CD8-positive, alpha-beta T cell (primary cell): ENCODE measurements at regions of chr19 and their contacts with region 1.

Region 1: GRCh38 chr19:58519355-58520256 is at the start of gene ZBTB45:
- DNase-seq: peak; percentile 73 to 96 (median 87)
- ATAC-seq: peak; percentile 80
- H3K4me3 ChIP-seq: peak within 1 kb of the TSS; percentile 63 to 91
- H3K4me3 Mint-ChIP-seq: peak within 1 kb of the TSS; percentile 95
- H3K27ac ChIP-seq: peak within 1 kb of the TSS; percentile 74 to 90
- H3K27ac Mint-ChIP-seq: peak within 1 kb of the TSS; percentile 97
- H3K4me1 ChIP-seq: peaks cover 23% of the 10 kb centered on the region
- H3K4me1 Mint-ChIP-seq: peaks cover 43% of the 10 kb centered on the region
- H3K27me3 ChIP-seq: no peaks in the 10 kb centered on the region
- H3K27me3 Mint-ChIP-seq: no peaks in the 10 kb centered on the region
- CTCF ChIP-seq: peak; percentile 57
- total RNA-seq, gene ZBTB45: 4.8 to 5.6 TPM

Region 2: GRCh38 chr19:57410877-57411671 is 1108.5 kb before region 1 on chr19 and contains the start of gene ZNF17:
- CTCF ChIA-PET with region 1: no interaction called
- POLR2A ChIA-PET with region 1: no interaction called
- intact Hi-C with region 1: loop called in 1 of 2 experiments (anchors 5 kb)
- DNase-seq: peak; percentile 83 to 96 (median 91)
- ATAC-seq: peak; percentile 100
- H3K4me3 ChIP-seq: peak within 1 kb of the TSS; percentile 82 to 99
- H3K4me3 Mint-ChIP-seq: peak within 1 kb of the TSS; percentile 96
- H3K27ac ChIP-seq: peak within 1 kb of the TSS; percentile 67 to 83
- H3K27ac Mint-ChIP-seq: peak within 1 kb of the TSS; percentile 94
- H3K4me1 ChIP-seq: peaks cover 13% of the 10 kb centered on the region
- H3K4me1 Mint-ChIP-seq: peaks cover 35% of the 10 kb centered on the region
- H3K27me3 ChIP-seq: no peaks in the 10 kb centered on the region
- H3K27me3 Mint-ChIP-seq: no peaks in the 10 kb centered on the region
- CTCF ChIP-seq: no peak
- total RNA-seq, gene ZNF17: 15.5 to 18.3 TPM

Region 3: GRCh38 chr19:58305065-58305931 is 214.3 kb before region 1 on chr19 and contains the start of gene ERVK3-1:
- CTCF ChIA-PET with region 1: no interaction called
- POLR2A ChIA-PET with region 1: no interaction called
- intact Hi-C with region 1: loop called (anchors 1 to 2 kb)
- DNase-seq: peak; percentile 89 to 99 (median 93)
- ATAC-seq: peak; percentile 96
- H3K4me3 ChIP-seq: peak within 1 kb of the TSS; percentile 82 to 89
- H3K4me3 Mint-ChIP-seq: peak within 1 kb of the TSS; percentile 98
- H3K27ac ChIP-seq: peak within 1 kb of the TSS; percentile 93 to 95
- H3K27ac Mint-ChIP-seq: peak within 1 kb of the TSS; percentile 99
- H3K4me1 ChIP-seq: peaks cover 27% of the 10 kb centered on the region
- H3K4me1 Mint-ChIP-seq: peaks cover 53% of the 10 kb centered on the region
- H3K27me3 ChIP-seq: no peaks in the 10 kb centered on the region
- H3K27me3 Mint-ChIP-seq: no peaks in the 10 kb centered on the region
- CTCF ChIP-seq: no peak
- total RNA-seq, gene ERVK3-1: 174 to 182 TPM

Region 4: GRCh38 chr19:58400916-58401839 is 118.4 kb before region 1 on chr19:
- CTCF ChIA-PET with region 1: no interaction called
- POLR2A ChIA-PET with region 1: no interaction called
- intact Hi-C with region 1: loop called in 1 of 2 experiments (anchors 1 kb)
- DNase-seq: peak; percentile 97 to 100 (median 99)
- ATAC-seq: peak; percentile 97
- H3K4me3 ChIP-seq: peak overlapping the region; percentile 72 to 77
- H3K4me3 Mint-ChIP-seq: peak overlapping the region; percentile 93
- H3K27ac ChIP-seq: peak overlapping the region; percentile 93 to 94
- H3K27ac Mint-ChIP-seq: peak overlapping the region; percentile 96
- H3K4me1 ChIP-seq: peaks cover 12% of the 10 kb centered on the region
- H3K4me1 Mint-ChIP-seq: peaks cover 15% of the 10 kb centered on the region
- H3K27me3 ChIP-seq: peaks cover 0 to 4% of the 10 kb centered on the region in 2 experiments
- H3K27me3 Mint-ChIP-seq: peaks cover 10% of the 10 kb centered on the region
- CTCF ChIP-seq: no peak

Region 5: DNA sequence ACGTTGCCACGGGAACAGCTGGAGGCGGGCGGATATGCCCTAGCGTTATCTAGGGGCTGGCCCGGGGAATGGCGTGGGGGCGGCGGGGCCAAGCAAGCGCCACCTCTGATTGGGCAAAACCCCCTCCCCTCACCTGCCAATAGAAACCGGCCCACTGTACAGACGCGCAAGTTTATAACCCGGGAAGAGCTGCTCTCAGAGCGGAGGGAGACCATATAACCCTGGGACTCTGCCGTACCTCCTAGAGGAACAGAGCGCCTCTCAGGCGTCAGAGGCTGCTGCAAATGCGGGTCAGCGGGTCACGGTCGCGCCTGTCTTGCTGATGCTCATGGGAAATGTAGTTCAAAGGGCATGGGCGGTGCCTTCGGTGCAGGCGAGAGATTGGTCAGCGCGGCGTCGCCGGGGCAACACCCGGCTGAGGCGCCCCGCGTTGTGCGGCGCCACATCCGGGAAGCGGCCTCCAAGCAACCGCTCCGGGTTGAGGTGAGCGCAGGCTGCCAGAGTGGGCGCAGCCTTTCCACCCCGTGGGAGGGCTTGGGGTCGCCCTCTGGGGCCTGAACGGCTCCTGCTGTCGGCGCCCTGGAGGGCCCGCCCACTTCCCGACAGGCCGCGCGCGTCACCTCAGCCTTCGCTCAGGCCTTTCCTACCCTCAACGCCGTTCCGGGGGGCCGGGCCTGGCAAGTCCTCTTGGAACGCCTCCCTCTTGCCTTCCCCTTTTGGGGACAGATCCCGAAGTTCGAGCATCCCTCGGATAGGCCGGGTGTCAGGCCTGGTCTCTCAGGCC is 43.7 kb before region 1 on chr19 and contains the start of gene ZNF446:
- CTCF ChIA-PET with region 1: no interaction called
- POLR2A ChIA-PET with region 1: interaction called, 5 read pairs
- intact Hi-C with region 1: loop called (anchors 1 kb)
- DNase-seq: peak; percentile 92 to 99 (median 97)
- ATAC-seq: peak; percentile 82
- H3K4me3 ChIP-seq: peak within 1 kb of the TSS; percentile 56 to 72
- H3K4me3 Mint-ChIP-seq: peak within 1 kb of the TSS; percentile 92
- H3K27ac ChIP-seq: peak within 1 kb of the TSS; percentile 75 to 95
- H3K27ac Mint-ChIP-seq: peak within 1 kb of the TSS; percentile 97
- H3K4me1 ChIP-seq: peaks cover 17% of the 10 kb centered on the region
- H3K4me1 Mint-ChIP-seq: peaks cover 16% of the 10 kb centered on the region
- H3K27me3 ChIP-seq: no peaks in the 10 kb centered on the region
- H3K27me3 Mint-ChIP-seq: no peaks in the 10 kb centered on the region
- CTCF ChIP-seq: no peak
- total RNA-seq, gene ZNF446: 14.6 to 16.5 TPM

Region 6: GRCh38 chr19:58558623-58559274 is 39.1 kb after region 1 on chr19:
- CTCF ChIA-PET with region 1: interaction called, 15 read pairs
- POLR2A ChIA-PET with region 1: interaction called, 18 read pairs
- intact Hi-C with region 1: loop called (anchors 1 kb)
- DNase-seq: peak; percentile 99 to 100 (median 100)
- ATAC-seq: peak; percentile 69
- H3K4me3 ChIP-seq: peak overlapping the region; percentile 61 to 96
- H3K4me3 Mint-ChIP-seq: peak overlapping the region; percentile 97
- H3K27ac ChIP-seq: peak overlapping the region; percentile 88 to 91
- H3K27ac Mint-ChIP-seq: peak overlapping the region; percentile 98
- H3K4me1 ChIP-seq: peaks cover 60% of the 10 kb centered on the region
- H3K4me1 Mint-ChIP-seq: peaks cover 72% of the 10 kb centered on the region
- H3K27me3 ChIP-seq: no peaks in the 10 kb centered on the region
- H3K27me3 Mint-ChIP-seq: no peaks in the 10 kb centered on the region
- CTCF ChIP-seq: no peak